ENCODE measurements at regions of chr9 and their contacts with region 1.

Region 1: GRCh38 chr9:27505744-27506161 is 18.3 kb upstream of the IFNK start:
- DNase-seq: no peak
- ATAC-seq: no peak
- H3K4me3 ChIP-seq: no peak overlapping the region
- H3K27ac ChIP-seq: no peak overlapping the region
- H3K4me1 ChIP-seq: no peaks in the 10 kb centered on the region
- H3K27me3 ChIP-seq: no peaks in the 10 kb centered on the region

Region 2: DNA sequence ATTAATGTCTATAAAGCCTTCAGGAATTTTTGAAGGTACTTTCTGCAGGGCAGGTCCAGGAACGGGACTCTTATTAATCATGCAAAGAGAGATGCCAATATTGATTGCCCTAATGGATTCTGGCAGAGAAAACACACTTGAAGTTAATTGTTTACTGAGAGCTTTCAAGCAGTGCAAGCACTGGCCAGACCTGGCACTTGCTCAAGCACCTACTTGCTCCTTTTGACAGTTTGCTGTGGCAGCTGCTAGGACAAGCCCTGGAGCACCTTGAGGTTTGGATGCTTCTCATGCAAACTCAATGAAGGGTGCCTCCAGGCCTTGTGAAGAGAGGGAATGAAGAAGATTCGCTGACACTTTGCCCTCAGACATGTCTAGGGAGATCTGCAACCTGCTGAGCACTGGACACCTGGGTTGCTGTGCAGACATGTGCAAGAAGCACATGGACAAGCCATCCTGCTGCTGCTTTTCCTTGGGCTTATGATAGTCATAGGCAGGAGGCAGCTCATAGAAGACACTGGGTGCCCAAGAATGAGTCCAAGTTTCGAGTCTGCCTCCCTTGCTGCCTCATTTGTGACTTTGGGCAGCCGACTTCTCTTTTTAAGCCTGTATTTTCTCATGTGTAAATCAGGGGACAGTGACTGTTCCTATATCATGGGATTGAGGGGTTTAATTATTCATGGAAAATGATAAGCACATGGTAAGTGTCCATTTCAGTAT is 120.0 kb before region 1 on chr9:
- intact Hi-C with region 1: loop called in 1 of 4 experiments (anchors 5 kb)
- DNase-seq: no peak
- ATAC-seq: no peak
- H3K4me3 ChIP-seq: no peak overlapping the region
- H3K27ac ChIP-seq: no peak overlapping the region
- H3K4me1 ChIP-seq: no peaks in the 10 kb centered on the region
- H3K27me3 ChIP-seq: no peaks in the 10 kb centered on the region

Region 3: GRCh38 chr9:27829621-27830020 is 323.9 kb after region 1 on chr9:
- intact Hi-C with region 1: no loop called
- DNase-seq: no peak
- ATAC-seq: no peak
- H3K4me3 ChIP-seq: no peak overlapping the region
- H3K27ac ChIP-seq: no peak overlapping the region
- H3K4me1 ChIP-seq: no peaks in the 10 kb centered on the region
- H3K27me3 ChIP-seq: no peaks in the 10 kb centered on the region

Measured in right cardiac atrium (tissue), 5 donors.